ENCODE measurements at regions of chr18 and their contacts with region 1.

Region 1: DNA sequence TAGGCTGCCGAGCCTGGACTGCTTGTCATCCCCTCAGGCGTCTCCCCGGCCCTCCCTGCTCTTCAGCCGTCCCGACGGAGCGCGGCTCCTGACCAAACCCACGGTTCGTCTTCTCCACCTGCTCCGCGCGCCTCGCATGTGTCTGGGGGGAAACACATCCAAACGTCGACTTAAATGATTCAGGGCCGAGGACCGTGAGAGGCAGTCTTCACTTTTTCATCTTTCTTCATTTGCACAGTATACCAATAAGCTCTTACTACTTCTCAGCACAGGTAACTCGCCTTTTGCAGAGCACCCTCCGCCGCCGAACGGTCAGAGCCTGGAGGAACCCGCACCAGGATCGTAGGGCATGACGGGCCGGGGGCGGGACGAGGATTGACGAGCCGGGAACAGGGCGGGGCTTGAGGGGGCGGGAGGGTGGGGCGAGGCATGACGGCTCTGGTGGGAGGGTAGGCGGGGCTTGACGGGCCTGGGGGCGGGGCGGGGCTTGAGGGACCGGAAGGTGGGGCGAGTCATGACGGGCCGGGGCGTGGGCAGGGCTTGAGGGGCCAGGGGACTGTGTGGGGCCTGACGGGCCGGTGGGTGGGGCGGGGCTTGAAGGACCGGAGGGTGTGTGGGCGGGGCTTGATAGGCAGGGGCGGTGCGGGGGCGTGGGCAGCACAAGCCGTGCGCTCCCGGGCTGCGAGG is at the start of gene SEH1L:
- DNase-seq: peak; percentile 97
- ATAC-seq: peak; percentile 88
- H3K4me3 Mint-ChIP-seq: peak within 1 kb of the TSS; percentile 98
- H3K27ac Mint-ChIP-seq: peak within 1 kb of the TSS; percentile 99
- H3K4me1 Mint-ChIP-seq: peaks cover 33% of the 10 kb centered on the region
- H3K27me3 Mint-ChIP-seq: no peaks in the 10 kb centered on the region
- total RNA-seq, gene SEH1L: 38.0 to 43.5 TPM

Region 2: DNA sequence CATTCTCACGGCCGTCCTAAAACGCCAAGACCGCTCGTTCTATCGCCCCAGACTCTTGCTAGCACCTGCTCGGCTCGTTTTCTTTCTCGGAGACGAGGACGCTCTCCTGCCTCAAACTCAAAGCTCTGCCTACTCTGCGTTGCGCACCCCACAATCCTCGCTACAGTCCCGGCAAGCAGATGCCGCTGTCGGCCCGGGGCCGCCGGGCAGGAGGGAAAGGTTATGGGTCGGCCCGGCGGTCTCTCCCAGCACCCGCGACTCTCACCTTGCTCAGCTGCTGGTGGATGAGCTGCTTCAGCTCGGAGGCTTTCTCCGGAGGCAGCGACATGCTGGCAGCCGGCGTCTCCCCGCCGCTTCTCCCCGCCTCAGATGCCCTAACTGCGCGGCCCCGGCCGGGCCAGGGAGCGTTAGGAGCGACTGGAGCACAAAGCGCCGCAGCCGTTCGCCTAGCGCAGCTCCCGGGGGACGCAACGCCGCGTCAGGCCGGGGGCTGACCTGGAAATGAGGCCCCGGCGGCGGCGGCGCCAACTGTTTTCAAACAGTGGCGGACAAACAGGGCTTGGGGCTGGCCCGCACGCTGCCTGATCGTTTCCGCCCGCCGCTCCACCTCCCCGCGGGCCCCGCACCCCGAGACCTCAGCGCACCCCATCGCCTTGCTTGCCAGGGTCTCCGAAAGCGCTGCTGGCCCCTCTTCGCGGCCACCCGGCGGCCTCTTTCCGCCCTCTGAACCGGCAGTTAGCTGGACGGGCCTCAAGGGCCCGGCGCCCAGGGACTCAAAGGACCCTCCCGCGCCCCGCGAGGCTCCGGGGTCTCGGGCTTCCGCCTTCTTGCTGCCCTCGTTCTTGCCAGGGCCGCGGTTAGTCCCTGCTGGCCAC is 245.0 kb before region 1 on chr18 and contains the starts of genes CEP76 and PSMG2:
- POLR2A ChIA-PET with region 1: interaction called, 10 read pairs
- DNase-seq: peak; percentile 90
- ATAC-seq: peak; percentile 82
- H3K4me3 Mint-ChIP-seq: peak within 1 kb of the TSS; percentile 87
- H3K27ac Mint-ChIP-seq: peak within 1 kb of the TSS; percentile 95
- H3K4me1 Mint-ChIP-seq: peaks cover 38% of the 10 kb centered on the region
- H3K27me3 Mint-ChIP-seq: no peaks in the 10 kb centered on the region
- total RNA-seq, gene CEP76: 12.4 to 14.4 TPM
- total RNA-seq, gene PSMG2: 90.6 to 97.2 TPM